ENCODE measurements at regions of chr12 and their contacts with region 1.

Region 1: DNA sequence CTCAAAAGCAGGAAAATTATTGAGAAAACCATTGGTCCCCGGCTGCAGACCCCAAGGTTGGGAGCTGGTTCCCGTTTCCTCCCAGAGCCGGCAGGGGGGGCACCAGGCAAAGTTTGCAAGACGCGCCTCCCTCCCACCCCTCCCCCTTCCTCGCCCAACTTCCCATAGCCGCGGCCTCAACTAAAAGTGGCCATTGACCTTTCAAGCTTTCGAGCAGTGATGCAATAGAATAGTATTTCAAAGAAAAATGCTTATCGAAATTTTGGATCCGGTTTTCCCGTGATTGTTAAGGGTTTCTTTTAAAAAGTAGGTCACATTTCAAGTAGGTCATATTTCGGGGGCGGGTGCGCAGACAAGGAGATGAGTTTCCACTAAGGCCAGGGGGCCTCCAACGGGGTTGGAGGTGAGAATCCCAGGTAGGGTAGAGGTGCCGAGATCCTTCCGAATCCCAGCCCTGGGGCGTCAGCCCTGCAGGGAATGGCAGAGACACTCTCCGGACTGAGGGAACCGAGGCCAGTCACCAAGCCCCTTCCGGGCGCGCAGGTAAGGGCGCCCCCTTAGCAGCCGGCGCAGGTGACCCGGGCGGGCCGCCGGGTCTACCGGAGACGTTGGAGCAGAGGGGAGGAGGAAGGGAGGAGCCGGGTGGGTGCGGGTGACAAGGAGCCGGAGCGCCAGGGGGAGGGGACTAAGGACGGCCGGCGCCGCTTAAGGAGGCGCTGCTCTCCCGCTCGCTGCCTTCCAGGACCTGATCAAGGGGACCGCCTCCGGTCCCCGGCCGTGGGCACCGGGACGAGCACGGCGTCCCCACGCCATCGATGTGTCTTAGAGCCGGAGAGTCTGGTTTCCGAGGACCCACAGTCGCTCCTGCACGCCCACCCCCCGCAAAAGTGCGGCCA is 2.6 kb upstream of the SOCS2 start:
- DNase-seq: peak; percentile 88 to 89
- H3K4me3 ChIP-seq: peak overlapping the region; percentile 49
- H3K4me3 Mint-ChIP-seq: peak overlapping the region; percentile 82
- H3K27ac Mint-ChIP-seq: peak overlapping the region; percentile 94
- H3K4me1 ChIP-seq: peaks cover 12% of the 10 kb centered on the region
- H3K4me1 Mint-ChIP-seq: peaks cover 23% of the 10 kb centered on the region
- H3K27me3 ChIP-seq: no peaks in the 10 kb centered on the region
- H3K27me3 Mint-ChIP-seq: no peaks in the 10 kb centered on the region
- CTCF ChIP-seq: peak; percentile 90 to 91

Region 2: DNA sequence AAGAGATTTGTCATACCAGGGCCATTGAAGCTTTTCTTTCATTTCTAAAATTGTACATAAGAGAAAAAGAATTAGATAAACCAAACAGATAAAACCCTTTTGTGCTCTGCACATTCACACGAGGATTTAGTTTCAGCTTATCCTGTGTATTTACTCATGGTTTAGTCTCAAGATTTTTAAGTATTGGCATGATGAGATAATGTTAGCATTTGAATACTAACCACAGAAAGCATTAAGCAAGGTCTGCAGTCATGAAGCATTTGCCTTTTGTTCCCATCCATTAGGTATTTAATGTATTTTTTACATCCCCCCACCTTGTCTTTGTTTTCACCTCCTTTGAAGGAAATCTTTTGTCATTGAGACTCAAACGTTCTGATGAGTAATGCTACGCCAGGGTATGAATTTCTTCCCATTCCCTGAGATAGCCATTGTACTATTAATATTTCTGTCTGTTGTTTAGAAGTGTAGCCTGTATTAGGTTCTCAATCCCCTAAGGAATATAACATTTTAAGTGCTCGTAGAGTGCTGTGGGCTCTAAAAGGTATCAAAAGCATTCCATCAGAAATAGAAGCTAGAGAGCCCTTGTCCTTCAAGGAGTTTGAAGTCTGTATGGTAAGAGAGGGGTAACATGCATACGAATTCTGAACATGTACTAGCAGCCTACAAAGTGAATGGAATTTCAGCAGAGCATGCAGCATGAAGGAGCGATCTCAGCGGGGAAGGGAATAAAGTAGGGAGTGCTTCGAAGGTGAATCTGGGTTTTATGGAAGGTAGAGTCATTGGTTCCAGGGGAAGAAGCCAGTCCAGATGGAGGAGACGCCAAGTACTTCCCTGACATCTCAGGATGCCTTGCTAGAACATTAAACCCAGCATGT is 129.6 kb after region 1 on chr12:
- CTCF ChIA-PET with region 1: interaction called, 3 read pairs
- POLR2A ChIA-PET with region 1: interaction called, 3 read pairs
- intact Hi-C with region 1: loop called (anchors 1 kb)
- DNase-seq: peak in 1 of 2 experiments; percentile 50
- H3K4me3 ChIP-seq: no peak overlapping the region
- H3K4me3 Mint-ChIP-seq: peak overlapping the region; percentile 79
- H3K27ac Mint-ChIP-seq: peak overlapping the region; percentile 93
- H3K4me1 ChIP-seq: peaks cover 52% of the 10 kb centered on the region
- H3K4me1 Mint-ChIP-seq: peaks cover 45% of the 10 kb centered on the region
- H3K27me3 ChIP-seq: no peaks in the 10 kb centered on the region
- H3K27me3 Mint-ChIP-seq: no peaks in the 10 kb centered on the region
- CTCF ChIP-seq: no peak

Region 3: DNA sequence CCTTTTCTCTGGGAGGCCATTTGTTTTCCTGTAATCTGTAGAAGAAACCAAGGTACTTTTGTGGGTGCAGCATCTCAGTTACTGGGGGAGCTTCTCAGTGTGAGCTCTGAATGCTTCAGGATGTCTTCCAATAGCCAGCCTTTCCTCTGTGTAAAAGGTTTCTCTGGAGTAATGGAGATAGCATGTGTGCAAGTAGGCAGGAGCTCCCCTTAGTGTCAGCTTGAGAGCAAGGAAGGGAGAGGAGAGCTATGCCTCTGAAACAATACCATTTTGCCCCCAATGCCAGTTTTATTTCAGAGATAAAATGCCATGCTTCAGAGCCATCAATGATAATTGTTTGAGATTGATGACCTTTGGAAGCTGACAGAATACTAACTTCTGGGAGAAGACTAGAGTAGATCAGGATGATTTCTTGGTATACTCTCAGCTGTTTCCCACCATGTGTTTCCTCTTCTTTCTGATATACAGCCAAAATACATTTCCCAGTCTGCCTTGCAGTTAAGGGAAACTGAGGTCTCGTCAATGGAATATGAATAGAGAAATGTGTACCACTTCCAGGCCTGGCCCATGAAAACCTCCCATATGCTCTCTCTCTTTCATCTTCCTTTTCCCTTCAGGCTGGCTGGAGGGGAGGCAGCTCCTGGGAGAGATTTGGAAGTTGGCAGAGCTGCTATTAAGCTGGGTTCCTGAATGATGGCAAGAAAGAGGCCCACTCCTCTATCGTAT is 233.0 kb after region 1 on chr12:
- CTCF ChIA-PET with region 1: interaction called, 6 read pairs
- POLR2A ChIA-PET with region 1: interaction called, 4 read pairs
- intact Hi-C with region 1: loop called (anchors 1 kb)
- DNase-seq: no peak
- H3K4me3 ChIP-seq: no peak overlapping the region
- H3K4me3 Mint-ChIP-seq: no peak overlapping the region
- H3K27ac Mint-ChIP-seq: no peak overlapping the region
- H3K4me1 ChIP-seq: peaks cover 6% of the 10 kb centered on the region; the same call in 1 of the 2 replicates
- H3K4me1 Mint-ChIP-seq: peaks cover 6% of the 10 kb centered on the region
- H3K27me3 ChIP-seq: no peaks in the 10 kb centered on the region
- H3K27me3 Mint-ChIP-seq: no peaks in the 10 kb centered on the region
- CTCF ChIP-seq: peak in 1 of 2 experiments; percentile 53

Region 4: GRCh38 chr12:93839064-93839463 is 269.2 kb after region 1 on chr12:
- CTCF ChIA-PET with region 1: interaction called, 4 read pairs
- POLR2A ChIA-PET with region 1: no interaction called
- intact Hi-C with region 1: loop called (anchors 1 kb)
- DNase-seq: no peak
- H3K4me3 ChIP-seq: no peak overlapping the region
- H3K4me3 Mint-ChIP-seq: no peak overlapping the region
- H3K27ac Mint-ChIP-seq: no peak overlapping the region
- H3K4me1 ChIP-seq: no peaks in the 10 kb centered on the region
- H3K4me1 Mint-ChIP-seq: peaks cover 17% of the 10 kb centered on the region
- H3K27me3 ChIP-seq: no peaks in the 10 kb centered on the region
- H3K27me3 Mint-ChIP-seq: no peaks in the 10 kb centered on the region
- CTCF ChIP-seq: no peak

Region 5: DNA sequence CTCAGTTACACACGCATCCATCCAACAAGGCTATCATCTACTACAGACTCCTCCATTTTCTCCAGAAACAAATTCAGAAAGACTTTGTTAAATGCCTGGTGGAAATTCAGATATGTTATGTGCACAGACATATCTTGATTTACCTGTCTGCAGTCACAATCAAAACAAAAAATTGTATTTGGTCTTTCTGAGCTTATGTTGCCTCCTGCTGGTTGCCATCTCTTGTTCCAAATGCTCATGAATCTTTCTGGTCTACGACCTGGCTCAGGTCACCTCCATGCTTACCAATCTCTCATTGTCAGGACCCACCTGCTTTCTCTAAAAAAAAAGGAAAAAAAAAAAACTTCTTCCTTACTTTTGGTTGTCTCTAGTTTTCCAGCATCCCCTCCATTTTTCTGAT is 409.3 kb after region 1 on chr12:
- CTCF ChIA-PET with region 1: no interaction called
- POLR2A ChIA-PET with region 1: no interaction called
- intact Hi-C with region 1: loop called (anchors 2 kb)
- DNase-seq: peak in 1 of 2 experiments; percentile 6
- H3K4me3 ChIP-seq: no peak overlapping the region
- H3K4me3 Mint-ChIP-seq: no peak overlapping the region
- H3K27ac Mint-ChIP-seq: no peak overlapping the region
- H3K4me1 ChIP-seq: no peaks in the 10 kb centered on the region
- H3K4me1 Mint-ChIP-seq: peaks cover 9% of the 10 kb centered on the region
- H3K27me3 ChIP-seq: no peaks in the 10 kb centered on the region
- H3K27me3 Mint-ChIP-seq: no peaks in the 10 kb centered on the region
- CTCF ChIP-seq: peak; percentile 20 to 21

Region 6: GRCh38 chr12:94101738-94102660 is 532.1 kb after region 1 on chr12:
- CTCF ChIA-PET with region 1: interaction called, 29 read pairs
- POLR2A ChIA-PET with region 1: interaction called, 5 read pairs
- intact Hi-C with region 1: loop called (anchors 1 kb)
- DNase-seq: peak; percentile 82 to 85
- H3K4me3 ChIP-seq: peak overlapping the region; percentile 50
- H3K4me3 Mint-ChIP-seq: peak overlapping the region; percentile 79
- H3K27ac Mint-ChIP-seq: no peak overlapping the region
- H3K4me1 ChIP-seq: peaks cover 28% of the 10 kb centered on the region
- H3K4me1 Mint-ChIP-seq: peaks cover 11% of the 10 kb centered on the region
- H3K27me3 ChIP-seq: no peaks in the 10 kb centered on the region
- H3K27me3 Mint-ChIP-seq: no peaks in the 10 kb centered on the region
- CTCF ChIP-seq: peak; percentile 78 to 81